IMR-90 (cell line): ENCODE measurements at regions of chr18 and their contacts with region 1.

Region 1: GRCh38 chr18:3485153-3486149 is 35.5 kb downstream of the TGIF1 start:
- DNase-seq: no peak
- ATAC-seq: no peak
- H3K4me3 ChIP-seq: no peak overlapping the region
- H3K27ac ChIP-seq: no peak overlapping the region
- H3K4me1 ChIP-seq: no peaks in the 10 kb centered on the region; the same call in 1 of the 2 replicates
- H3K27me3 ChIP-seq: no peaks in the 10 kb centered on the region
- CTCF ChIP-seq: no peak
- POLR2A ChIP-seq: no peak
- RAD21 ChIP-seq: no peak

Region 2: DNA sequence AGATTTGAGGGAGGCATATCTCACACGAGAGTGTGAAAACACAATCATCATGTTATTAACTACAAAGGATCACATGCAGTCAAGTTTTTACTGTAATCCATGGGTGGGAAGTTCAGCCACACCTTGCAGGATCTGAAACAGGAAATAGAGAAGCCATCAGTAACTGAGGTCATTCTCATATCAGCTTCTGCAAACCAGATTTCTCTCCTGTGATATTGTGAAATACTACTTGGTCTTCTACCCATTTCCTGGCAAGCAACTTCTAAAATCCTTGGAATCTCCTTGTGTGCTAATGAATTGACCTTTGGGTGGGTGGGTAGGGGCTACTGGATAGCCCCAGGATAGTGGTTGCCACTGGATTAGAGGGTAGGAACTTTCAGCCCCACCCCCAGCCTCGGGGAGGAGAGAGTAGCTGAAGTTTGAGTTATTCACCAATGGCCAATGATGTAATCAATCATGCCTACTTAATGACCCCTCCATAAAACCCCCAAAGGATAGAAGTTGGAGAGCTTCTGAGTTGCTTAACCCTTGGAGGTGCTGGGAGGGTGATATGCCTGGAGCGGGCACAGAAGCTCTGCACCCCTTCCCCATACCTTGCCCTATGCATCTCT is 61.1 kb before region 1 on chr18:
- CTCF ChIA-PET with region 1: no interaction called
- POLR2A ChIA-PET with region 1: no interaction called
- dilution Hi-C with region 1: no loop called
- in situ Hi-C with region 1: no loop called
- intact Hi-C with region 1: no loop called
- DNase-seq: no peak
- ATAC-seq: no peak
- H3K4me3 ChIP-seq: no peak overlapping the region
- H3K27ac ChIP-seq: no peak overlapping the region
- H3K4me1 ChIP-seq: no peaks in the 10 kb centered on the region
- H3K27me3 ChIP-seq: no peaks in the 10 kb centered on the region
- CTCF ChIP-seq: no peak
- POLR2A ChIP-seq: no peak
- RAD21 ChIP-seq: no peak

Region 3: GRCh38 chr18:3671181-3671580 is 185.7 kb after region 1 on chr18:
- CTCF ChIA-PET with region 1: no interaction called
- POLR2A ChIA-PET with region 1: interaction called, 16 read pairs
- dilution Hi-C with region 1: no loop called
- in situ Hi-C with region 1: no loop called
- intact Hi-C with region 1: no loop called
- DNase-seq: peak; percentile 50
- ATAC-seq: peak; percentile 61
- H3K4me3 ChIP-seq: no peak overlapping the region
- H3K27ac ChIP-seq: no peak overlapping the region
- H3K4me1 ChIP-seq: peaks cover 8% of the 10 kb centered on the region
- H3K27me3 ChIP-seq: no peaks in the 10 kb centered on the region
- CTCF ChIP-seq: no peak
- POLR2A ChIP-seq: no peak
- RAD21 ChIP-seq: no peak